ENCODE measurements at regions of chr2 and their contacts with region 1.

Region 1: GRCh38 chr2:180980106-180980942 is at the start of gene UBE2E3:
- DNase-seq: peak; percentile 67
- H3K4me3 ChIP-seq: peak within 1 kb of the TSS; percentile 62 to 82 (median 80)
- H3K27ac ChIP-seq: peak within 1 kb of the TSS; percentile 72
- H3K4me1 ChIP-seq: peaks cover 23% of the 10 kb centered on the region
- H3K27me3 ChIP-seq: no peaks in the 10 kb centered on the region
- CTCF ChIP-seq: peak; percentile 20 to 77
- total RNA-seq, gene UBE2E3: 65.0 to 86.3 TPM

Region 2: DNA sequence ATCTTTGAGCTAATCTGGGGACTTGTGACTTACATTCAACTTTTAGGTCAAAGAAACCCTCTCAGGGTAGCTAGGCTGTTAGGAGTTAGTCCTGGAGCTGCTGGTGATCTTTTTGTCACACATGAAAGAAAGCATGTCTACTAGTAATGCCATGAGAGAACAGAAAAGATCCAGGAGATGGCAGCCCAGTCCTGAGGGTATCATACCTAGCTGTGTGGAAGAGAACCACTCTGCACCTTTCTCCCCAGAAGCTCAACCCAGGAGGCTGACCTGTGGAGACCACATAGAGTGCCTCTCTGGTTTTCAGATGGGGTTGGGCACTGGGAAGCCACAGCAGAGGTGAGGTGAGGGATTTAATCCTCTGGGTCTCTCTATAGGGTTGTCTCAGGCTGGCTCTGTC is 460.1 kb before region 1 on chr2:
- CTCF ChIA-PET with region 1: no interaction called
- dilution Hi-C with region 1: no loop called
- in situ Hi-C with region 1: no loop called
- intact Hi-C with region 1: loop called (anchors 2 kb)
- DNase-seq: peak; percentile 36
- H3K4me3 ChIP-seq: no peak overlapping the region
- H3K27ac ChIP-seq: no peak overlapping the region
- H3K4me1 ChIP-seq: peaks cover 38% of the 10 kb centered on the region
- H3K27me3 ChIP-seq: no peaks in the 10 kb centered on the region
- CTCF ChIP-seq: peak in 1 of 2 donors; percentile 46

Region 3: GRCh38 chr2:180604077-180604476 is 376.2 kb before region 1 on chr2:
- CTCF ChIA-PET with region 1: interaction called, 5 read pairs
- dilution Hi-C with region 1: no loop called
- in situ Hi-C with region 1: no loop called
- intact Hi-C with region 1: loop called (anchors 2 kb)
- DNase-seq: peak; percentile 8
- H3K4me3 ChIP-seq: no peak overlapping the region
- H3K27ac ChIP-seq: no peak overlapping the region
- H3K4me1 ChIP-seq: no peaks in the 10 kb centered on the region
- H3K27me3 ChIP-seq: no peaks in the 10 kb centered on the region
- CTCF ChIP-seq: peak; percentile 56 to 57

Region 4: DNA sequence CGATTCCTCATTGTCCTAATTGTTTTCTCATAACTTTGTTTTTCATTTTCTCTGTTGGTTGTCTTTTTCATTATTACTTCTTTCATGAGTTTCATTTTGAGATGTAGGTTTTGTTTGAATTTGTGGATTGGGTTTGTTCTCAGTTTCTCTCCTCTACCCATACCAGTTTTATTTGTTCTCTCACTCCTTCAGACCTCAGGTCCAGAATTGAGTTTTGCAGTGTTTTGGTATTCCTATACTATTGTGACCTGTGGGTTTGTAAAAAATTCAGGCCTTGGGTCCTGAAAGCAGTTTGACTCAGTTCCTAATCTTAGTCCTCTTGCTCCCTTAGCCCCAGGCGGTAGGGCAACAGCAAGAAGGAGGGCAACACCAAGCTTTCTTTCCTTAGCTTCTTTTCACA is 28.2 kb before region 1 on chr2:
- CTCF ChIA-PET with region 1: no interaction called
- dilution Hi-C with region 1: no loop called
- in situ Hi-C with region 1: no loop called
- intact Hi-C with region 1: no loop called
- DNase-seq: no peak
- H3K4me3 ChIP-seq: no peak overlapping the region
- H3K27ac ChIP-seq: no peak overlapping the region
- H3K4me1 ChIP-seq: no peaks in the 10 kb centered on the region
- H3K27me3 ChIP-seq: no peaks in the 10 kb centered on the region
- CTCF ChIP-seq: no peak

Region 5: DNA sequence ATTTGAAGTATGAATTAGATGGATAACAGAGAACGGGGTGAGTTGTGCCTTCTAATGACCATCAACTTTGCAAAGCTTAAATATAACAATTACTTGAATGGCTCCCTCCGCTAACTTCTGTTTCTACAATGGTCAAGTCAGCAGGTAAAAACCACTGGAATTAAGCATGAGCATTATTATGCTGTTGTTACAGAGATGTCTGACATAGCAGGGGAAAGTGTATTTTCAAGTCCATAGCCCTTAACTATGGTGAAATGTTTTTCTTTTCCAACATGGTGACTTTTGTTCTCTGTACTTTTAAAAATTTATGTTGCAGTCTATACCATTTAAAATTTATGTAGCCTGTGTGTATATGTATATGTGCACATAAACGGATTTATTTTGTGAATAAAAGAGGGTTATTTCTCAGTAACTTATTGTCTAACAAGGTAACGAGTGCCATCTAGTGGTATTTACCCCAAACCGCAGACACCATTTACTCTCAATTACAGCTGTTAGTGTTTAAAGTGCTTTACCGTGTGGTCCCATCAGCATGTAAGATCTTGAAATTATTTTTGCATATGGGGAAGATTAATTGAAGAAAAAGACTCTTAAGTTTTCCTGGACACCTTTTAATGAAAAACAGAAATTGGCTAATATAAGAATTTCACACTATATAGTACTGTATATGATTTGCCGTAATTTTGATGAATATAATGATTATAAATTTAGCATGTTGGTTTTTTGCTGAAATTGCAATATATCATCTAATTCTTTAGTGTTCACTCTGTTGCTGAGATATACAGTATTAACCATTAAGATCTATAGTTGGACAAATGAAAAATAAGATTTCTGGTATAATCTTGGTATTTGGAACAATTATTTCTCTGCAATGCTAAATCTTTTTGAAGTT is 78.3 kb after region 1 on chr2:
- CTCF ChIA-PET with region 1: interaction called, 3 read pairs
- dilution Hi-C with region 1: no loop called
- in situ Hi-C with region 1: no loop called
- intact Hi-C with region 1: loop called (anchors 1 kb)
- DNase-seq: peak; percentile 31
- H3K4me3 ChIP-seq: no peak overlapping the region
- H3K27ac ChIP-seq: no peak overlapping the region
- H3K4me1 ChIP-seq: peaks cover 7% of the 10 kb centered on the region
- H3K27me3 ChIP-seq: no peaks in the 10 kb centered on the region
- CTCF ChIP-seq: peak; percentile 70 to 74

Measured in mammary epithelial cell (primary cell).